ENCODE measurements at regions of chr5 and their contacts with region 1.

Region 1: DNA sequence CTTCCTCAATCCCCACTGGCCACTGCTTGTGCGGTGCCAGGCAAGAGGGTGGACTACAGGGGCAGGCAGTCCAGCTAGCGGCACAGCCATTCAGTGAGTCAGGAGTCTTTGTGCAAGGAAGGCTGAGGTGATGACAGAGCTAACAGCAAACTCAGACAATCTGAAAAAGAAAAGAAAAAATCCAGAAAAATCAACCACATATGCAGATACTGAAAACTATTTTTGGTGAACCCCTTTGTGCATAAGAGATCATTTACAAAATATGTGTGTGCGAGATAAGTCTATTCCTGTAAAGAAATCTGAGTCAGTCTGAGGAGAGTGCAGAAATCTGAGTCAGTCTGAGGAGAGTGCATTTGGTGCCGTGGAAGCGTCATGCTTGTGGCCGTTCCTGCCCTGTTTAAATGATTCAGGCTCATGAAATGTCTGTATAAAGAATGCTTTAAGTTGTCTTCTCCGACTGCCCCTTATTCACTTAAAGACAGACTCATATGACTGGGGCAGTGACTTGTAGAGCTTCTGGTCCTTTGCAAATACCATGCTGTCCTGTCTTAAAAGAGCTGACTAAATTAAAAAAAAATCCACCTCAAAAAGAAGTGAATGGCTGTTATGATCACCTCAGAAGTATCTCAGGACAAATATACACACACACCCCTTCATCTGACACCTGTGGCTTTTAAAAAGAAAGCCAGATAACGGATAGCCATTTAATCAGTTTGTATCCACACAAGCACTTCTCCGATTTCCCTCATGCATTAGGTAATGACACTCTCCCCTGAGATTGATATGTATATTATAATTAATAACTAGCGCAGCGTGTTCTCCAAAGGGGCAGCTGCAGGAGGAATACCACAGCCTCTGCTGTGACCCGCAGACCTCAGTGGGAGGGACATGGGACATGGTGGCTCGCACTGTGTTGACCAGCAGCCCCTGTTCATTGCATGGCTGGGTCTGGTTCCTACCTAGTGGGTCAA is 47.3 kb downstream of the TRIO start:
- DNase-seq: peak in 1 of 2 donors; percentile 89
- H3K4me3 ChIP-seq: peak overlapping the region in 1 of 2 donors; percentile 46
- H3K27ac ChIP-seq: peak overlapping the region; percentile 95 to 99
- H3K4me1 ChIP-seq: peaks cover 29 to 66% of the 10 kb centered on the region in 2 donors
- H3K27me3 ChIP-seq: no peaks in the 10 kb centered on the region
- CTCF ChIP-seq: no peak

Region 2: DNA sequence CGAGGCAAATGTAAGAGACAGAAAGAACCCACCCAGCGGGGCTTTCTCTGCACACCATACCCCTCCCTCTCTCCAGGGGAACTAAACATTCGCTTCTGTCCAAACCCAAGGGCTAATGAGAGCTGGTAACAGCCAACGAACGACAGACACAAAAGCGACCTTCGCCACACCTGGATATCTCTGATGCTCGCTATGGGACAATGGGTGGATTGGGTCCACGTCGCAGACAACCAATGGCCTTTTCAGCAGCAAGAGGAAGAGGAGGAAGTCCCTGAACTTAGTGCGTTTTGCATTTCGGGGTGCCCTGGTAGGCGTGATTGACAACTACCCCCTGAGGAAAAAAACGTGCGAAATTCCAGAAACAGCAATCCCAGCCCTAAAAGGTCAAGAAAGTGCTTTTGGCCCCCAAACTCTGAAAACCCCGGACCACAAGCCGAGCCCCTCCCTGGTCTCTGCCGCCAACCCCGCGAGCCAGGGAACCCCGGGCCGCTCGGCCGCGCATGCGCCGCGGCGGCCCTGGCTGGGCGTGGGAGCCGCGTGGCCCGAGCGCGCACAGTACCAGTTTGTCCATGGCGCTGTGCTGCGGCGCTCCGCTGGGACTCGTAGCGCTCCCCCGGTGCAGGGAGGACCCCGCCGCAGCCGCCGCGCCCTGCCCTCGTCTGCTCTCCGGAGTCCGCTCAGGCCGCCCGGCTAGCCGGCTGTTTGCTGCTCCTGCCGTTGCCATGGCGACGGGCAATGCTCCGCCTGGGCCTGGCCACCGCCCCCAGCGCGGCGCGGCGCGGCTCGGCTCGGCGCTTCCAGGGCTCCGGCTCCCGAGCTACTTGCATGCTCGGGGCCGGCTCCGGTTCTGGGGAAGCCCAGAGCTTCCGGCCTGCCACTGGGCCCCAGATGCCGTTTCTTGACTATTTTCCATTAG is 179.1 kb before region 1 on chr5:
- intact Hi-C with region 1: loop called (anchors 5 kb)
- DNase-seq: peak; percentile 43 to 90
- H3K4me3 ChIP-seq: peak overlapping the region; percentile 51 to 65
- H3K27ac ChIP-seq: peak overlapping the region; percentile 9 to 13
- H3K4me1 ChIP-seq: peaks cover 4 to 5% of the 10 kb centered on the region in 2 donors
- H3K27me3 ChIP-seq: no peaks in the 10 kb centered on the region
- CTCF ChIP-seq: no peak

Region 3: GRCh38 chr5:14081791-14082190 is 108.7 kb before region 1 on chr5:
- intact Hi-C with region 1: no loop called
- DNase-seq: no peak
- H3K4me3 ChIP-seq: no peak overlapping the region
- H3K27ac ChIP-seq: no peak overlapping the region
- H3K4me1 ChIP-seq: no peaks in the 10 kb centered on the region
- H3K27me3 ChIP-seq: no peaks in the 10 kb centered on the region
- CTCF ChIP-seq: no peak

Region 4: GRCh38 chr5:14108170-14108996 is 82.1 kb before region 1 on chr5:
- intact Hi-C with region 1: loop called (anchors 5 kb)
- DNase-seq: peak in 1 of 2 donors; percentile 77
- H3K4me3 ChIP-seq: peak overlapping the region; percentile 0 to 50
- H3K27ac ChIP-seq: peak overlapping the region; percentile 19 to 27
- H3K4me1 ChIP-seq: peaks cover 2% of the 10 kb centered on the region in 2 donors
- H3K27me3 ChIP-seq: no peaks in the 10 kb centered on the region
- CTCF ChIP-seq: peak; percentile 40 to 83 (median 79)

Region 5: GRCh38 chr5:14156650-14157493 is 33.6 kb before region 1 on chr5:
- intact Hi-C with region 1: loop called (anchors 1 kb)
- DNase-seq: peak in 1 of 2 donors; percentile 80
- H3K4me3 ChIP-seq: peak overlapping the region; percentile 24 to 51
- H3K27ac ChIP-seq: peak overlapping the region; percentile 61 to 67
- H3K4me1 ChIP-seq: peaks cover 12 to 42% of the 10 kb centered on the region in 2 donors
- H3K27me3 ChIP-seq: no peaks in the 10 kb centered on the region
- CTCF ChIP-seq: no peak

Region 6: DNA sequence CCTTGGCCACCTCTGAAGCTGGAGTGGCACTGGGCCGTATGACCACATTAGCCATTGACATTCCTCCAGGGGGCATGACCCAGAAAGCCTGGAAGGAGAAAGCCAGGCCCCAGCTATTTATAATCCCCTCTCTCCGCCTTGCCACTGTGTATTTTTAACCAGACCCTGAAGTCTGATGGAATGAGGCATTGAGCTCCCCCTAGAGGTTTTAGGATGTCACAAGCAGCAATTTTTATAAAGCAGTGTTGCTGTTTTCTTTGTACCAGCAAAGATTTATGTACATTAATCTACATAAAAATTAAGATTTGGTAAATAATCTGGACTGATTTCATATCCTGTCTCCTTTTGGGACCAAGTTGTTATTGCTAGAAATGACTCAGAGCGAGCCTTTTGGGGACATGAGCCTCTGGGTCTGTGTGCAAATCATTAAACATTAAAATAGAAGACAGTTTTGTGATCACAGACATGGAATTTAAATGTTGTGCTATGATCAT is 79.8 kb after region 1 on chr5:
- intact Hi-C with region 1: loop called (anchors 2 kb)
- DNase-seq: peak in 1 of 2 donors; percentile 87
- H3K4me3 ChIP-seq: no peak overlapping the region
- H3K27ac ChIP-seq: peak overlapping the region; percentile 64 to 69
- H3K4me1 ChIP-seq: peaks cover 16 to 37% of the 10 kb centered on the region in 2 donors
- H3K27me3 ChIP-seq: no peaks in the 10 kb centered on the region
- CTCF ChIP-seq: peak; percentile 66 to 76 (median 76)